Naive thymus-derived CD4-positive, alpha-beta T cell (primary cell): ENCODE measurements at regions of chr18 and their contacts with region 1.

Region 1: GRCh38 chr18:75209129-75209950 is at the start of gene PTGR3:
- DNase-seq: peak; percentile 55 to 78 (median 74)
- ATAC-seq: peak; percentile 67
- H3K4me3 ChIP-seq: peak within 1 kb of the TSS; percentile 89
- H3K4me3 Mint-ChIP-seq: peak within 1 kb of the TSS; percentile 96 to 100 (median 99)
- H3K27ac ChIP-seq: peak within 1 kb of the TSS; percentile 90
- H3K27ac Mint-ChIP-seq: peak within 1 kb of the TSS; percentile 94 to 99 (median 98)
- H3K4me1 ChIP-seq: peaks cover 26 to 33% of the 10 kb centered on the region in 2 donors
- H3K4me1 Mint-ChIP-seq: peaks cover 48 to 67% (median 56%) of the 10 kb centered on the region in 7 donors
- H3K27me3 ChIP-seq: no peaks in the 10 kb centered on the region
- H3K27me3 Mint-ChIP-seq: peaks cover 0 to 36% (median 0%) of the 10 kb centered on the region in 5 donors
- total RNA-seq, gene PTGR3: 25.1 to 59.1 (median 31.7) TPM

Region 2: DNA sequence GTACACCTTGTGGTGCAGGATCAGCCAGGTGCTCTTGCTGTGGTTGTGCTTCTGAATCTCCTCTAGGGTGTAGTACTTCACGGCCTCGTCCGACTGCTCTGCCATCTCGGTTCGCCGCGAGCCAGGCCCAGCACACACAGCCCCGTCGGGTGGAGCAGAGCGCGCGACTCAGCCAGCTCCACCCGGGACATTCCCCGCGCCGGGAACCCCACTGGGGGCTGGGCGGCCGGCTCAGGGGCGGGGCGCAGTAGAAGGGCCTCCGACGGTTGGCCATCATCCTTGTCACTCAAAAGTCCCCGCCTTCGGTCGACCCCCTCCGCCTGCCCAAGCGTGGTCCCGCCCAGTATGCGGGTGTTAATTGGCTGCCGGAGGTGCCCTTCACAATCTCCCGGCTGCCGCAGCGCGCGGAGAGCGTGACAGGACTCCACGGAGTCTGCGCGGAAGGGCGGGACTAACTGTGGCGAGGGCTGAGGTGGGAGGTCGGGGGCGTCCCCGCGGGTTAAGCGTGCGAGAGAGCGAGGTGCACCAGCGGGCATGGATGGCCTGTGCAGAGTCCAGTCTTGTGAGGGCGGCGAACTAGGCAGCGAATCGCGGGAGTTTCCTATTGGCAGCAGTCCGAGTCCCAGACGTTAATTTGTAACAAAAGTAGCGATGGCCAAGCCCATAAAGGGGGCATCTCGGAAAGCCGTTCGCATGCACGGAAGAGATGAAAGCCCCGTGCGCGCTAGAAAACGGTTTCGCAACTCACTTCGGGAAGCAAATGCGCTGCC is 917.4 kb before region 1 on chr18 and contains the start of gene CYB5A:
- CTCF ChIA-PET with region 1: no interaction called
- POLR2A ChIA-PET with region 1: no interaction called
- intact Hi-C with region 1: loop called in 1 of 2 experiments (anchors 5 kb)
- DNase-seq: peak; percentile 97 to 99 (median 98)
- ATAC-seq: peak; percentile 99
- H3K4me3 ChIP-seq: peak within 1 kb of the TSS; percentile 91
- H3K4me3 Mint-ChIP-seq: peak within 1 kb of the TSS in 2 of 10 donors; percentile 92 to 94
- H3K27ac ChIP-seq: peak within 1 kb of the TSS; percentile 72
- H3K27ac Mint-ChIP-seq: peak within 1 kb of the TSS in 8 of 9 donors; percentile 56 to 95 (median 87)
- H3K4me1 ChIP-seq: peaks cover 0 to 3% of the 10 kb centered on the region in 2 donors
- H3K4me1 Mint-ChIP-seq: peaks cover 0 to 30% (median 15%) of the 10 kb centered on the region in 7 donors
- H3K27me3 ChIP-seq: no peaks in the 10 kb centered on the region
- H3K27me3 Mint-ChIP-seq: peaks cover 0 to 12% (median 0%) of the 10 kb centered on the region in 5 donors
- total RNA-seq, gene CYB5A: 13.9 to 36.9 (median 22.6) TPM

Region 3: DNA sequence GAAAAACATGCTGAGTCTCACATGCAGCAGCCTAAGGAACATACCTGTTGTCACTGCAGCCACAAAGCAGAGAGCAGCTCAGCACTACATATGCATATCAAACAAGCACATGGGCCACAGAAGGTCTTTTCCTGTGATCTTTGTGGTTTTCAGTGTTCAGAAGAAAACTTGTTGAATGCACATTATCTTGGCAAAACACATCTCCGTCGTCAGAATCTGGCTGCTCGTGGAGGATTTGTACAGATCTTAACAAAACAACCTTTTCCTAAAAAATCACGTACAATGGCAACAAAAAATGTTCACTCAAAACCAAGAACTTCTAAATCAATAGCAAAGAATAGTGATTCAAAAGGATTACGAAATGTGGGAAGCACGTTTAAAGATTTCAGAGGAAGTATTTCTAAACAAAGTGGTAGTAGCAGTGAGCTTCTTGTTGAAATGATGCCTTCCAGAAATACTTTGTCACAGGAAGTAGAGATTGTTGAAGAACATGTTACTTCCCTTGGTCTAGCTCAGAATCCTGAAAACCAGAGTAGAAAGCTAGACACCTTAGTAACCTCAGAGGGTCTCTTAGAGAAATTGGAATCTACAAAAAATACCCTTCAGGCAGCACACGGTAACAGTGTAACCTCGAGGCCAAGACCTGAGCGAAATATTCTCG is 577.6 kb before region 1 on chr18:
- CTCF ChIA-PET with region 1: interaction called, 3 read pairs
- POLR2A ChIA-PET with region 1: interaction called, 5 read pairs
- intact Hi-C with region 1: loop called (anchors 1 to 5 kb)
- DNase-seq: peak in 7 of 9 donors; percentile 35 to 81 (median 67)
- ATAC-seq: peak; percentile 91
- H3K4me3 ChIP-seq: peak overlapping the region; percentile 6
- H3K4me3 Mint-ChIP-seq: peak overlapping the region; percentile 68 to 91 (median 86)
- H3K27ac ChIP-seq: peak overlapping the region; percentile 59
- H3K27ac Mint-ChIP-seq: peak overlapping the region; percentile 90 to 98 (median 95)
- H3K4me1 ChIP-seq: peaks cover 24 to 44% of the 10 kb centered on the region in 2 donors
- H3K4me1 Mint-ChIP-seq: peaks cover 46 to 79% (median 67%) of the 10 kb centered on the region in 7 donors
- H3K27me3 ChIP-seq: no peaks in the 10 kb centered on the region
- H3K27me3 Mint-ChIP-seq: no peaks in the 10 kb centered on the region

Region 4: GRCh38 chr18:75029481-75029880 is 179.9 kb before region 1 on chr18:
- CTCF ChIA-PET with region 1: no interaction called
- POLR2A ChIA-PET with region 1: interaction called, 5 read pairs
- intact Hi-C with region 1: loop called in 1 of 2 experiments (anchors 5 kb)
- DNase-seq: peak in 7 of 9 donors; percentile 24 to 73 (median 58)
- ATAC-seq: peak; percentile 73
- H3K4me3 ChIP-seq: no peak overlapping the region
- H3K4me3 Mint-ChIP-seq: peak overlapping the region in 8 of 10 donors; percentile 43 to 62 (median 56)
- H3K27ac ChIP-seq: peak overlapping the region; percentile 14
- H3K27ac Mint-ChIP-seq: peak overlapping the region; percentile 56 to 95 (median 86)
- H3K4me1 ChIP-seq: peaks cover 4 to 10% of the 10 kb centered on the region in 2 donors
- H3K4me1 Mint-ChIP-seq: peaks cover 12 to 31% (median 21%) of the 10 kb centered on the region in 7 donors
- H3K27me3 ChIP-seq: no peaks in the 10 kb centered on the region
- H3K27me3 Mint-ChIP-seq: no peaks in the 10 kb centered on the region

Region 5: DNA sequence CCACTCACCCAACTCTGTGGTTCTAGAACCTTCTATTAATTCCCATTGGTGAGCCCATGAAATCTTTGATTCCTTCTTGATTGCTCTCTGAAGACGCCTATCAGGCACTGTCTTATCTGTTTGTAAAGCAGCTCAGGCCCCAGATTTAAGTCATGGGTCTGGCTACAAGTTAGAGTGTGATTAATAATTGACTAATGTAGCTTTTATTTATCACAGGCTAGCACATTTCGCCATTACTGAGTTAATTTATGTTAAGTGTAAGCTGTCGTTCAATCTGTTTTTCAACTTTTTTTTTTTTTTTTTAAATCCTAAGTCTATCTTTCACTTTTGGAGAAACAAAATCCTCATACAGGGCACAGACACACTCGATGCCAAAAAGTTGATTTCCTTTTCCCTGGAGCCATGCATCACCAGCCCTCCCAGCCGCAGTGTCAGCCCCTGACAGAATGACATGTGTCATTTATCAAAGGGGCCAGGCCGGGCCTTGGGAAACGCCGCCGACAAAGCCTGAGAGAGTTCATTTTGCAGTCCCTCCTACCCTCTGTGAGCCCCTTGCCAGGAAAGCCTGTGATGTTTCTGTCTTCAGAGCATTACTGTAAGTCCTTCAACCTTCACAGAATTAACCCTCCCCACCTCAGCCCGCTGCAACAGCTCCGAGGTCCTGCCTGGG is 17.1 kb after region 1 on chr18:
- CTCF ChIA-PET with region 1: interaction called, 4 read pairs
- POLR2A ChIA-PET with region 1: interaction called, 13 read pairs
- intact Hi-C with region 1: loop called in 1 of 2 experiments (anchors 1 kb)
- DNase-seq: no peak
- ATAC-seq: no peak
- H3K4me3 ChIP-seq: no peak overlapping the region
- H3K4me3 Mint-ChIP-seq: peak overlapping the region; percentile 20 to 84 (median 73)
- H3K27ac ChIP-seq: peak overlapping the region; percentile 37
- H3K27ac Mint-ChIP-seq: peak overlapping the region in 8 of 9 donors; percentile 36 to 86 (median 81)
- H3K4me1 ChIP-seq: peaks cover 0 to 19% of the 10 kb centered on the region in 2 donors
- H3K4me1 Mint-ChIP-seq: peaks cover 18 to 98% (median 87%) of the 10 kb centered on the region in 7 donors
- H3K27me3 ChIP-seq: no peaks in the 10 kb centered on the region
- H3K27me3 Mint-ChIP-seq: no peaks in the 10 kb centered on the region

Region 6: DNA sequence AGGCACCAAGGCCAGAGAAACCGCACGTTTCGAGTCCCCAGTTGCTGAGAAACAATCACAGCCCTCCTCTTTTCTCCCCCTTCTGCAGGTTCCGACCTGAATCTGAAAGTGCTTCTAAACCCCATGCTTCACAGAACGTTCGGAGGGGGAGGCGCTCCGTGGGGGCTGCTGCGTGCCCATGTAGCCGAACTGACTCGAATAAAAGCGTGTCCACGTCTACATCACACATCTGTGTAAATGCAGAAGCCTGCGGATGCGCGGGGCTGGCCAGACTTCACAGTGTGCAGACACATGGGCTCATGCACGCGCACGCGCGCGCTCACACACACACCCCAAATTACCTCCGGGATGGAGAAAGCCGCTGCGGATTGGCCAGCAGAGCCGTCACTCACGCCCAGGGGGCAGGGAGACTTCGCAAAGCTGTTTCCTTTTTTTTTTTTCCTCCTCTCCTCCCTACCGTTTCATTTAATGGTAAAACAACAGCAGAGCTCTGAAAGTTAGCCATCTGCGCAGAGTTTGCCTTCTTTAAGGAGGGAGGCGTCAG is 1283.4 kb after region 1 on chr18:
- CTCF ChIA-PET with region 1: no interaction called
- POLR2A ChIA-PET with region 1: no interaction called
- intact Hi-C with region 1: loop called (anchors 2 to 5 kb)
- DNase-seq: peak; percentile 97 to 99 (median 99)
- ATAC-seq: peak; percentile 86
- H3K4me3 ChIP-seq: peak overlapping the region; percentile 87
- H3K4me3 Mint-ChIP-seq: peak overlapping the region; percentile 94 to 96 (median 95)
- H3K27ac ChIP-seq: peak overlapping the region; percentile 65
- H3K27ac Mint-ChIP-seq: peak overlapping the region; percentile 57 to 95 (median 87)
- H3K4me1 ChIP-seq: peaks cover 8 to 9% of the 10 kb centered on the region in 2 donors
- H3K4me1 Mint-ChIP-seq: peaks cover 28 to 53% (median 41%) of the 10 kb centered on the region in 7 donors
- H3K27me3 ChIP-seq: no peaks in the 10 kb centered on the region
- H3K27me3 Mint-ChIP-seq: peaks cover 0 to 80% (median 0%) of the 10 kb centered on the region in 5 donors